ENCODE measurements at regions of chr9 and their contacts with region 1.

Region 1: DNA sequence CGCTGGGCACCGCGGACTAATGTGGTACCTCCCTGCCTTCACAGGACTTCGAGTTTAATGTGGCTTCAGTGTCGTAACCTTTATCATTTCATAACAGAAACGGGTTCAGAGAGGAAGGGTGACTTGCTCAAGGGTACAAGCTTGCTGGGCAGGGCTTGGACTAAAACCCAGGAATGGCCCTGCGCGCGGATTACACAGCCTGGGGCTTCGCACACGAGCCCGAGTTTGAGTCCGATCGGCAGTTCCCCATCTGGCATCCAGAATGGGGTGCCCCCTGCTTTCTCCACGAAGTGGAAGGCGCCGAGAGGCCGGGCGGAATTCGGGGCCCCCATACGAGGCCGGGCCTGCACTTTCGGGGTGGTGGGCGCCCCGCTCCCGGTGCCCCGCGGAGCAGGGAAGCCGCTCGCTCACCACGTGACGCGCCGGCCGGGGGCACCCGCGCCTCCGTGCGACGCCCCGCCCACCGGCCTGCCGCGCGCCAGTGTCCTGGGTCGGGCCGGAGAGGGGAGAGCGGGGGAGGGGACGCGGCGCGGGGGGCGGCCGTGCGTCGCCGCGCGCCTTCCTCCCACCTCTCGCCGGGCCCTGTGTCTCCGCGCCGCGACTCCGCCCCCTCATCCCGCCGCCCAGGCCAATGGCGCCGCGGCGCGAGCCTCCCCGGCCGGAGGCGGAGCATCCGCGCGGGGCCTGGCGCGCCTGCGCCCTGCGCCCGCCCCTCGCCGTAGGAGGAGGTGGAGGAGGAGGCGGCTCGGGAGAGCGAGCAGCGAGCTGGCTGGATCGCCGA is at the start of gene SET:
- DNase-seq: peak; percentile 88 to 95 (median 93)
- H3K4me3 ChIP-seq: peak within 1 kb of the TSS; percentile 63 to 88
- H3K4me3 Mint-ChIP-seq: peak within 1 kb of the TSS; percentile 83 to 95 (median 92)
- H3K27ac ChIP-seq: peak within 1 kb of the TSS; percentile 82
- H3K27ac Mint-ChIP-seq: peak within 1 kb of the TSS; percentile 93 to 98 (median 96)
- H3K4me1 ChIP-seq: peaks cover 67% of the 10 kb centered on the region
- H3K4me1 Mint-ChIP-seq: peaks cover 40 to 67% (median 54%) of the 10 kb centered on the region in 4 donors
- H3K27me3 ChIP-seq: no peaks in the 10 kb centered on the region
- H3K27me3 Mint-ChIP-seq: peaks cover 0 to 1% of the 10 kb centered on the region in 2 donors
- total RNA-seq, gene SET: 261 to 264 TPM

Region 2: GRCh38 chr9:128643519-128644300 is 45.0 kb before region 1 on chr9:
- CTCF ChIA-PET with region 1: interaction called, 5 read pairs
- POLR2A ChIA-PET with region 1: interaction called, 11 read pairs
- intact Hi-C with region 1: no loop called
- DNase-seq: no peak
- H3K4me3 ChIP-seq: no peak overlapping the region
- H3K4me3 Mint-ChIP-seq: no peak overlapping the region
- H3K27ac ChIP-seq: no peak overlapping the region
- H3K27ac Mint-ChIP-seq: peak overlapping the region in 1 of 7 donors; percentile 19
- H3K4me1 ChIP-seq: no peaks in the 10 kb centered on the region
- H3K4me1 Mint-ChIP-seq: peaks cover 0 to 3% (median 0%) of the 10 kb centered on the region in 4 donors
- H3K27me3 ChIP-seq: no peaks in the 10 kb centered on the region
- H3K27me3 Mint-ChIP-seq: no peaks in the 10 kb centered on the region

Region 3: DNA sequence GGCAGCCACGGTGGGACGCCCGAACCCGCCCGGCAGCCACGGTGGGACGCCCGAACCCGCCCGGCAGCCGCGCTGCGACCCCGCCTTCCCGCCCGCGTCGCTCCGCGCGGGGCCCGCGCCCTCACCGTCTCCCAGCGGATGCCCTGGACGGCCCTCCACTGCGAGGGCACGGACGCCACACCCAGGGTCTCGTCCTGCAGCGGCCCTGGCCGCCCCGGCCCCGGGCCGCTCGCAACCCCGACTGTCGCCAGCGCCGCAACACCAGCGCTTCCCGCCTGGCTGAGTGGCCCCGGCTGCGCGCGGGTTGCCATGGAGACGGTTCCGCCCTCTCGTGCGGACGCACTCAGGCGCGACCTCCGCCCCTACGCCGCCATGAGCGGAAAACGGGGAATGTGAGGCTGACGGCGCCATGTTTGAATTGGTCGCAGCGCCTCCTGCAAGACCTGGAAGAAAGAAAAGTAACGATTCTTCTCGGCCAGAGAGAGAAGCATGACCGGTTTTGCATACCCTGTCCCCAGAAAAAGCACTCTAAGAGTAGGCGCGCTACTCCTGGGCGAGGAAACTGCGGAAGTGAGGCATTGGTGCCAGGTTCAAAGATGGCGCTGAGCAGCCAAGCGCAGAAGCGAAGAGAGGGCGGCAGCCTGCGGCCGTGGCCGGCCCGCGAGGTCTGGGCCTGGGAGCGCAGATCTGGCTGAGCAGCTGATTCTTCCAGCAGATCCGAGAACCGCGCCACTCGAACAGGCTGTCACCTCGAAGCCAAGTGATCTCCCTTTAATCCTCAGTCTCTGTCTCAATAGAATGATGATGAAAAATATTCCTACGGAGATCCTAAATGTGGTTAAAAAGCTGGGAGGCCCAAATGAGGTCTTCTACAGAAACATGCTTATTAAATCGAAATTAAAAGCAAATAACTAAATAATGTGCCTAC is 32.0 kb before region 1 on chr9 and contains the start of gene DYNC2I2:
- CTCF ChIA-PET with region 1: interaction called, 3 read pairs
- POLR2A ChIA-PET with region 1: interaction called, 24 read pairs
- intact Hi-C with region 1: loop called (anchors 1 kb)
- DNase-seq: peak; percentile 95 to 96 (median 96)
- H3K4me3 ChIP-seq: peak within 1 kb of the TSS; percentile 95 to 98
- H3K4me3 Mint-ChIP-seq: peak within 1 kb of the TSS; percentile 91 to 98 (median 94)
- H3K27ac ChIP-seq: peak within 1 kb of the TSS; percentile 95
- H3K27ac Mint-ChIP-seq: peak within 1 kb of the TSS; percentile 95 to 100 (median 99)
- H3K4me1 ChIP-seq: peaks cover 8% of the 10 kb centered on the region
- H3K4me1 Mint-ChIP-seq: peaks cover 2 to 15% (median 6%) of the 10 kb centered on the region in 4 donors
- H3K27me3 ChIP-seq: no peaks in the 10 kb centered on the region
- H3K27me3 Mint-ChIP-seq: no peaks in the 10 kb centered on the region
- total RNA-seq, gene DYNC2I2: 4.3 to 4.6 TPM

Region 4: DNA sequence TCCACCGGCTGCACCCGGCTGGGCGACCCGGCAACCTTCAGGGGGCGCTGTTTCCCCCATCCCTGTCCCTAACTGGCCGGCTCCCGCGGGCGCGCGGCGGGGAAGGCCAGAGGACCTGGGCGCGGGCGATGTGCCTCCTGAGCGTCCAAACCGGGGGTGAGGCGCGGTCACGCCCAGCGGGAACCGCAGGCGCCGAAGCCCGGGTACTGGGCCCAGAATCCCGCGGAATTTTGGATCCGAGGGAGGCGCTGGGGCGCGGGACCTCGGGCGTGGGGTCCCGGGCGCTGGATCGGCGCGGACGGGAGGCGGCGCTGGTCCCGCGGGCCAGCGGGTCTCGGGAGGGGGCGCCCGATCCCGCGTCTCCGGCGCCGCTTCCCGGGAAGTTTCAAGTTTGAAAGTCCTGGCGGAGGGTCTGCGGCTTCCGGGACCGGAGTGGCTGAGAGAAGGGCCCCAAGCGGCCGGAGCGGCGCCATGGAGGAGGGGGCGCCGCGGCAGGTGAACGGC is 13.8 kb after region 1 on chr9 and contains the start of gene PKN3:
- CTCF ChIA-PET with region 1: interaction called, 9 read pairs
- POLR2A ChIA-PET with region 1: interaction called, 33 read pairs
- intact Hi-C with region 1: loop called (anchors 2 kb)
- DNase-seq: peak; percentile 79 to 87 (median 82)
- H3K4me3 ChIP-seq: peak within 1 kb of the TSS; percentile 17 to 45
- H3K4me3 Mint-ChIP-seq: peak within 1 kb of the TSS; percentile 83 to 95 (median 90)
- H3K27ac ChIP-seq: peak within 1 kb of the TSS; percentile 38
- H3K27ac Mint-ChIP-seq: peak within 1 kb of the TSS in 6 of 7 donors; percentile 76 to 94 (median 84)
- H3K4me1 ChIP-seq: peaks cover 10% of the 10 kb centered on the region
- H3K4me1 Mint-ChIP-seq: peaks cover 2 to 19% (median 11%) of the 10 kb centered on the region in 4 donors
- H3K27me3 ChIP-seq: no peaks in the 10 kb centered on the region
- H3K27me3 Mint-ChIP-seq: no peaks in the 10 kb centered on the region
- total RNA-seq, gene PKN3: 1.7 to 2.6 TPM

Region 5: GRCh38 chr9:128723866-128724743 is 35.4 kb after region 1 on chr9 and contains the start of gene ZDHHC12:
- CTCF ChIA-PET with region 1: no interaction called
- POLR2A ChIA-PET with region 1: interaction called, 37 read pairs
- intact Hi-C with region 1: loop called (anchors 1 kb)
- DNase-seq: peak; percentile 98 to 99 (median 99)
- H3K4me3 ChIP-seq: peak within 1 kb of the TSS; percentile 89 to 95
- H3K4me3 Mint-ChIP-seq: peak within 1 kb of the TSS; percentile 90 to 94 (median 92)
- H3K27ac ChIP-seq: peak within 1 kb of the TSS; percentile 70
- H3K27ac Mint-ChIP-seq: peak within 1 kb of the TSS; percentile 89 to 97 (median 95)
- H3K4me1 ChIP-seq: peaks cover 28% of the 10 kb centered on the region
- H3K4me1 Mint-ChIP-seq: peaks cover 23 to 45% (median 32%) of the 10 kb centered on the region in 4 donors
- H3K27me3 ChIP-seq: no peaks in the 10 kb centered on the region
- H3K27me3 Mint-ChIP-seq: no peaks in the 10 kb centered on the region
- total RNA-seq, gene ZDHHC12: 24.6 to 25.7 TPM

Region 6: GRCh38 chr9:128771745-128772519 is 83.2 kb after region 1 on chr9 and contains the start of gene ZER1:
- CTCF ChIA-PET with region 1: no interaction called
- POLR2A ChIA-PET with region 1: interaction called, 9 read pairs
- intact Hi-C with region 1: loop called (anchors 1 kb)
- DNase-seq: peak; percentile 93 to 95 (median 94)
- H3K4me3 ChIP-seq: peak within 1 kb of the TSS; percentile 73 to 98
- H3K4me3 Mint-ChIP-seq: peak within 1 kb of the TSS; percentile 96 to 99 (median 98)
- H3K27ac ChIP-seq: peak within 1 kb of the TSS; percentile 96
- H3K27ac Mint-ChIP-seq: peak within 1 kb of the TSS; percentile 92 to 99 (median 99)
- H3K4me1 ChIP-seq: peaks cover 32% of the 10 kb centered on the region
- H3K4me1 Mint-ChIP-seq: peaks cover 19 to 38% (median 26%) of the 10 kb centered on the region in 4 donors
- H3K27me3 ChIP-seq: no peaks in the 10 kb centered on the region
- H3K27me3 Mint-ChIP-seq: no peaks in the 10 kb centered on the region
- total RNA-seq, gene ZER1: 37.9 to 44.2 TPM

Region 7: DNA sequence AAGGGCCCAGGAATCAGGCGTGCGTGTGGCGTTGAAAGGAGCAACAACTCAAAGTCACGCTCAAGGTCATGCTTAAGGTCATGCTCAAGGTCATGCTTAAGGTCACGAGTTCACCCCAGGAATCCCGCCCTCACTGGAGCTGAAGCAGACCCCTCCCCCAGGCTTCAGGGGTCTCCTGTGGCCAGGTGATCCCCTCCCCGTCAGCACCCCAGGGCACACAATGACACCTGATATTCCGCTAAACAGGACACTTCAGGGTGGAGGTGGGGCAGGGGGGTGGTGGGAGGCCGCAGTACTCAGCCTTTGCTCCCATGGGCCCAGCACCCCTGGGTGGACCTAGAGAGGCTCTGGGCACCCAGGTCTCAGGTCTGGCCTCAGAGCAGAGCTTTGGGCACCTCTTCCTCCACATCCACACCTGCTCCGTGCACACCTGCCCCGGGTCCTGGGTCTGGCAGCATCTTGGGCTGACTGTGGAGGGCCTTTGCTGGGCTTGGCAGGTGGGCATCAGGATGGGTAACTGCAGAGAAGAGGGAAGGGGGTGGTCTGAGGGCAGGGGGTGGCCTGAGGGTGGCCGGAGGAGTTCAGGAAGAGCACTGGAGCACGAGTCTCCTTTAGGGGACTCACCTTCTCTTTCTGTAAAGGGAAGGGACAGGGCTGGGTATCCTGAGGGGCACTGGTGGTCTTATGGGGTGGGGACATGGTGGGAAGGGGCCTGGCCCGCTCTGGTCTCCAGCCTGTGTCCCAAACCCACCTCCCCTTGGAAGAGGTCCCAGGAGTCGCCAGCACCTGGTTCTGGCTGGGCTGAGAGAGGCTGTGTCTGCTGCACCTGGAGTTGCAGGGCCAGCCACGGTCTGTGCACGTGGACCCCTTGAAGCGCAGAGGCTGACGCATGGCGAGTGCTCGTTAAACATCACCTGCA is 595.9 kb after region 1 on chr9:
- CTCF ChIA-PET with region 1: no interaction called
- POLR2A ChIA-PET with region 1: no interaction called
- intact Hi-C with region 1: no loop called
- DNase-seq: no peak
- H3K4me3 ChIP-seq: no peak overlapping the region
- H3K4me3 Mint-ChIP-seq: no peak overlapping the region
- H3K27ac ChIP-seq: no peak overlapping the region
- H3K27ac Mint-ChIP-seq: no peak overlapping the region
- H3K4me1 ChIP-seq: no peaks in the 10 kb centered on the region
- H3K4me1 Mint-ChIP-seq: no peaks in the 10 kb centered on the region
- H3K27me3 ChIP-seq: no peaks in the 10 kb centered on the region
- H3K27me3 Mint-ChIP-seq: no peaks in the 10 kb centered on the region

Measured in CD4-positive, alpha-beta memory T cell (primary cell).